ENCODE measurements at regions of chr12 and their contacts with region 1.

Region 1: GRCh38 chr12:30754709-30755394 is at the start of gene CAPRIN2:
- DNase-seq: peak; percentile 96
- ATAC-seq: peak; percentile 94
- H3K4me3 Mint-ChIP-seq: peak within 1 kb of the TSS; percentile 87
- H3K27ac Mint-ChIP-seq: peak within 1 kb of the TSS; percentile 97
- H3K4me1 Mint-ChIP-seq: peaks cover 52% of the 10 kb centered on the region
- H3K27me3 Mint-ChIP-seq: no peaks in the 10 kb centered on the region
- CTCF ChIP-seq: no peak
- total RNA-seq, gene CAPRIN2: 55.9 to 62.7 TPM (median 59.7 TPM) in 3 replicates

Region 2: DNA sequence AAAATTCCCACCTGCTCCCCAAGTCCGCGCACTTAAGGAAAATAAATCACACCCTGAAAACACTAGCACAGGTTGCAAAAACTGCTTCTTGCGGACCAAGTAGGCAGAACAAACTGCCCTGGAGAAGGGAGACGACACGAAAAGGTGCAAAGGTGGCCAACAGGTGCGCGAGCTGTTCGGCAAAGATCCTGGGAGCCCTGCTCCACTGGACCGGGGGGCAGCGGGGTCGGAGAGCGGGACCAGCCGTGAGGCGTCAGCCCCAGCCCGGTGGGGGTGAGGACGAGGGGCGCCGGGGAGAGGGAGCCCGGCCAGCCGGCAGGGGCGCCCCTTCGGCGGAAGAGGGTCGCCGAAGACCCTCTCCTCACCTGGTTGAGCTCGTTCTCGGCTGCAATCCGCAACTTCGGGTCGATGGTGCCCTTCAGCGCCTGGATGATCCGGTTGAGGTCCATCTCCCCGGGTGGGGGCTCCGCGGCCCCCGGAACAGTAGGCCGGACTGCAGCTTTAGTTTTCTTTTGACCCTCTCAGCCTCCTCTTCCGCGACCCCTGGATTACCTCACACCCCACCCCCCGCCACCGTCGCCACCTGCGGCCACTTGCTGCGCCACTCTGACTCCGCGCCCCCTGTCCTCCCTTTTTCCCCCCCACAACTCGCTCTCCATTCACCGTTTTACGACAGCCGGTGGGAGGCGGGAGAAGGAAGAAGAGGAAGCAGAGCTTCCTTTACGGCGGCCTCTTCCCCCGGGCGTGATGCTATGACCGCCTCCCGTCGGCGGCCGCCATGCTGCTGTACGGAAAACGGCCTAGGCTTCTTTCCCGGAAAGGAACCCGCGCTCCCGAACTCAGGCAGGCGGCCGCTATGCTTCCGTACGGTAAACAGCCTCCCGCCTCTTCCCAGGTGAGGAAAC is 59.4 kb before region 1 on chr12 and contains the start of gene IPO8:
- CTCF ChIA-PET with region 1: interaction called, 35 read pairs
- POLR2A ChIA-PET with region 1: interaction called, 6 read pairs
- DNase-seq: peak; percentile 94
- ATAC-seq: peak; percentile 86
- H3K4me3 Mint-ChIP-seq: peak within 1 kb of the TSS; percentile 93
- H3K27ac Mint-ChIP-seq: peak within 1 kb of the TSS; percentile 90
- H3K4me1 Mint-ChIP-seq: peaks cover 41% of the 10 kb centered on the region
- H3K27me3 Mint-ChIP-seq: no peaks in the 10 kb centered on the region
- CTCF ChIP-seq: no peak
- total RNA-seq, gene IPO8: 41.2 to 44.8 TPM (median 43.1 TPM) in 3 replicates

Region 3: DNA sequence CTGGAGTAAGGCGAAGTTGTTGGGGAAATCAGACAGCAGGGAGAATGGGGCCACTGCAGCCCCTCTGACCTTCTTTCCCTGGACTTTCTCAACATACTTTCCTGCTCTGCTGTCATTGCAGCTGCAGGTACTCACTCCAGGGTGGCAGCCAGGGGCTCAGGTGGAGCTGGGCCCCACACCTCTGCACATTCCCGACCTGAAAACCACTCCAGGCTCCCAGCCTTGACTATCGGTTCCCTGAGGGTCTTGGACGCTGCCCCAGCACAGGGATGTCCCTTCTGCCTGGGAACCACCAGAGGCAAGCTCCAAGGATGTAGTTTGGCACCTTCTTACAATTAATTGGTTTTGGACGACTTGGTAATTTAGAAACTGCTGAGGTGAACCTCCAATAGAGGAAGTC is 24.7 kb after region 1 on chr12:
- CTCF ChIA-PET with region 1: no interaction called
- POLR2A ChIA-PET with region 1: no interaction called
- DNase-seq: no peak
- ATAC-seq: no peak
- H3K4me3 Mint-ChIP-seq: no peak overlapping the region
- H3K27ac Mint-ChIP-seq: no peak overlapping the region
- H3K4me1 Mint-ChIP-seq: peaks cover 19% of the 10 kb centered on the region
- H3K27me3 Mint-ChIP-seq: peaks cover 22% of the 10 kb centered on the region
- CTCF ChIP-seq: no peak

Region 4: DNA sequence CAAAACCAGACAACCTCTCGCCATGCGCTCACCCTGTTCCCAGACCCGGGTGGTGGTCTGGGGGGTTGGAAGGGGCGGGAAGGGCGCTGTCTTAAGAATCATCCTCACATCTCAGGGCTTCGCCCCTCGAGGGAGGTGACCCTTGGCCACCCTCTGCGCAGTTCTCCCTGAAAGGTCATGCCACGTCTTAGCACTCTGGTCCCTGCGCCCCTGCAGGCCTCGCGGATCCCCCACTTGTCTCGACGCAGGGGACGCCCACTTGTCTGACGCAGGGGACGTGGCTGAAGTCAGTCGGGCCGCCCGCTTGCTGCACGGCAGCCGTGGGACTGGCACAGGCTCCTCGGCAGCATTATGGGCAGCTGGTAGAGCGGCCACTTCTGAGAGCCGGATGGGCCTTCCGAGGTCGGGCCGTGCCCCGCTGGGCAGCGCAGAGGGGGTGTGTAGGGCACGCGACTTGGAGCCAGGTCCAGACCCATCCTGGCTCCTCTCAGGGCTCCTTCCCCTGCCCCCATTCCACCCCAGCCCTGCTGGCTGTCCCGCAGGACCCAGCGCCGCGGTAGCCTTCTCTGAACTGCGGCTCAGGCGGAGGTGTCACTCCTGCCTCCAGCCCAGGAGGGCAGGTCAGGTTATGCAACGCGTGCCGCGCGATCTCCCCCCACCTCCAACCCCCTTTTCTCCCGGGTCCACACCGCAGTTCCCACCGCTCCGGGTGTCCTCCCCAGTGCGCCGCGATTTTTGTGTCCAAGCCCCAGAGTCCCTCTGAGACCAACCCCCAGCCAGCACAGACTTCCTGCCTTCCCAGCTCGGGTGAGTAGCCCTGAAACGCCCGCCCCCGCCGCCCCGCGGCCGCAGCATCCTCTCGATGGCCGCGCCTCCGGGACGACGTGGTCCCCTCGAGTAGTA is 40.8 kb after region 1 on chr12:
- CTCF ChIA-PET with region 1: interaction called, 59 read pairs
- POLR2A ChIA-PET with region 1: interaction called, 37 read pairs
- DNase-seq: peak; percentile 81
- ATAC-seq: peak; percentile 61
- H3K4me3 Mint-ChIP-seq: peak overlapping the region; percentile 78
- H3K27ac Mint-ChIP-seq: peak overlapping the region; percentile 82
- H3K4me1 Mint-ChIP-seq: peaks cover 58% of the 10 kb centered on the region
- H3K27me3 Mint-ChIP-seq: peaks cover 19% of the 10 kb centered on the region
- CTCF ChIP-seq: no peak

Region 5: DNA sequence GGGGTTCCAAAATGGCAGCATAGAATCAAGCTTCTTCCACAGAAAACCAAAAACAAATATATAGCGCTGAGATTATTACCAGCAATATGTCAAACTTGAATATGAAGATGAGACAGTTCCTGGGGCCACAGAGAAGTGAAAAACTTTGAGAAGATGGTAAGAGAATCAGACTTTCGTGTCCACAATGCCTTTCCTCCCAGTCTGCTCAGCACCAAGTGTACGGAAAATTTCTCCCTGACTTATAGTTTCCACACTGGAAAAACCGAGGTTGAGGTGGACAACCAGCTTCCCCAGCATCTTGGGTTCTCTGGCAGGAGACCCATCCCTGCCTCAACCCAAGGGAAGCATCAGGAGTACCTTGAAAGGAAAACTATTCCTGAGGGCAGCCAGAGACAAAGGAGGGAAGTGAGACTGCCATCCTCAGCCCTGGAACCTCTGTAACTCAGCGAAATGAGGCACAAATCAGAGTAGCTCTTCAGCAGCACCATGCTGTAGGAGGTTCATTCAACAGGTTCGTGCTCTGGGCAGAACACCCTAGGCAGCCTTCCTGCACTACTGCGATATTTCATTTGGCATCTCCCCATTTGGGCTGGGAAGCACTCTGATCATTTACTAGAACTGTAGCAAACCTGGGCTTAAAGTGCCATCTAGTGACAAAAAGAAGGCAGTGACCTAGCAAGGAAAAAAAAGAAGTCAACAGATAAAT is 52.3 kb after region 1 on chr12:
- CTCF ChIA-PET with region 1: interaction called, 20 read pairs
- POLR2A ChIA-PET with region 1: interaction called, 6 read pairs
- DNase-seq: peak; percentile 37
- ATAC-seq: peak; percentile 90
- H3K4me3 Mint-ChIP-seq: 0 out of 2 replicates have a peak overlapping the region, but pooled peaks have one; percentile 10
- H3K27ac Mint-ChIP-seq: no peak overlapping the region
- H3K4me1 Mint-ChIP-seq: peaks cover 27% of the 10 kb centered on the region
- H3K27me3 Mint-ChIP-seq: peaks cover 34% of the 10 kb centered on the region
- CTCF ChIP-seq: peak; percentile 47; the same call in 1 of the 2 replicates

Measured in WTC11 (cell line).